Activated CD4-positive, alpha-beta T cell treated with anti-CD3 and anti-CD28 coated beads for 36 hours (primary cell): ENCODE measurements at regions of chr1 and their contacts with region 1.

Region 1: DNA sequence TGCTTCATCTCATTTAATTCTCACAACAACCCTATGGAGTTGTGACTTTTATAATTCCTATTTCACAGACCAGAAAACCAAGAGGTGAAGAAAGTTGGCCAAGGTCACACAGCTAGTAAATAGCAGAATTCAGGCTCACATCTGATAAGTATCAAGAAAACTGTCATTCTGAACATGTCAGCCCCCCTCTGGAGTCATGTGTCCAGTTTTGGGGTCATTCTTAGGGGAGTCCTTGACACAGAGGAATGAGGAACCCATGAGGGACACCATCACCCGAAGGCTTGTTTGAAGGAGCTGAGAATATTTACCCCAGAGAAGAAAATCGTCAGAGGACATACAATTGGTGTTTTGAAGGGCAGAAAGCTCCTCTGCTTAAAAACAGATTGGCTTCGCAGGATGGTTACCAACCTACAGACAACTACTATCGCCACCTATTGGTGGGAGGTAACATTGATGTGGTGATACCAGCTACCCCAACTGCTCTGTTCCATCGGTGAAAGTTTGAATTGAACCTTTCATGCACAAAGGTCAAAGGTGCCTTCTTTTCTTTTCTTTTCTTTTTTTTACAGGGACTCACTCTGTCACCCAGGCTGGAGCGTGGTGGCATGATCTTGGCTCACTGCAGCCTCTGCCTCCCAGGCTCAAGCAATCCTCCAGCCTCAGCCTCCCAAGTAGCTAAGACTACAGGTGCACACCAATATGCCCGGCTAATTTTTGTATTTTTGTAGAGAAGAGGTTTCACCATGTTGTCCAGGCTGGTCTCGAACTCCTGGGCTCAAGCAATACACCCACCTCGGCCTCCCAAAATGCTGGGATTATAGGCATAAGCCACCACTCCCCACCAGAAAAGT is 31.3 kb downstream of the NCMAP start:
- DNase-seq: peak; percentile 75
- ATAC-seq: peak; percentile 100
- H3K4me3 Mint-ChIP-seq: no peak overlapping the region
- H3K27ac Mint-ChIP-seq: peak overlapping the region; percentile 55
- H3K4me1 Mint-ChIP-seq: peaks cover 6% of the 10 kb centered on the region
- H3K27me3 Mint-ChIP-seq: peaks cover 3% of the 10 kb centered on the region

Region 2: DNA sequence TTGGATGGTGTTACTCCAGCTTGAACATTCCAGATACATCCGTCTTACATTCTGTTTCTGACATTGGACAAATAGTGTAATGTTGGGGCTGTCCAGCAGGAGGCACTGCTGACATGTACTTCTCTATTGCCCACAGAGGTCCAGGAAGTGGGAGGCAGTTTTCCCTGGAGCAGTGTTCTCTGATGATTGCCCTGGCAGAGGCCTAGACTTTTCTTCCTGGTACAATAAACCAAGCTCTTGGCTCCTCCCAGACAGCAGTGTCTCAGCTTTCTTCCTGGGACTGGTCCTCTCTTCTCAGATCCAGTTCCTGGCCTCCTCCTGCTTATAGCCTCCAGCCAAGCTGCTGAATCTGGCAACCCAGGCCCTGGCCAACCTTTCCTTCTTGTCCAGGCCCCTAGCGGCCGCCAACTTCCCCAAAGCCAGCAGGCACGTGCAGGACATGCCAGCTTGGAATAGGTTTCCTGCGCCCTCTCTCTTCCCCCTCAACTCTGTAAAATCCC is 385.2 kb before region 1 on chr1:
- CTCF ChIA-PET with region 1: interaction called, 13 read pairs
- POLR2A ChIA-PET with region 1: no interaction called
- intact Hi-C with region 1: loop called (anchors 1 kb)
- DNase-seq: peak; percentile 78
- ATAC-seq: no peak
- H3K4me3 Mint-ChIP-seq: no peak overlapping the region
- H3K27ac Mint-ChIP-seq: no peak overlapping the region
- H3K4me1 Mint-ChIP-seq: peaks cover 27% of the 10 kb centered on the region
- H3K27me3 Mint-ChIP-seq: peaks cover 2% of the 10 kb centered on the region

Region 3: DNA sequence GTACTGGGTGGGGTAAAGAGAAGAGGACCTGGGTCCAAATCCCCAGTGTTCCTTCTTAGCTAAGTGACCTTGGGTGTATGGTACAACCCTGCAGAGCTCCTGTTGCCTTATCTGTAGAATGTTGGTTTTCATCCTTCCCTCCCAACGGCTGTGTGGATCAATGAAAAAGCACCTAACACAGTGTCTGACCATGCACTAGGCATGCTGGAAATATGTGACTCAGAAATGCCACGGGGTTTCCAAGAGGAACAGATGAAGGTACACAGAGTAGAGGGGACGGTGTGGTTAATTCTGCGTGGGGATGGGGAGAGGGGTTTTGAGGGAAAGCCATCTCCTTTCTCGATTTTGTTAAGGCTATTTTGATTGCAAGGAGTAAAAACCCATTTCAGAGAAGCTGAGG is 163.0 kb before region 1 on chr1:
- CTCF ChIA-PET with region 1: interaction called, 63 read pairs
- POLR2A ChIA-PET with region 1: no interaction called
- intact Hi-C with region 1: no loop called
- DNase-seq: peak; percentile 25
- ATAC-seq: peak; percentile 53
- H3K4me3 Mint-ChIP-seq: no peak overlapping the region
- H3K27ac Mint-ChIP-seq: peak overlapping the region; percentile 67
- H3K4me1 Mint-ChIP-seq: peaks cover 61% of the 10 kb centered on the region
- H3K27me3 Mint-ChIP-seq: no peaks in the 10 kb centered on the region

Region 4: GRCh38 chr1:24526940-24527542 is 60.2 kb before region 1 on chr1:
- CTCF ChIA-PET with region 1: interaction called, 32 read pairs
- POLR2A ChIA-PET with region 1: no interaction called
- intact Hi-C with region 1: no loop called
- DNase-seq: peak; percentile 68
- ATAC-seq: peak; percentile 76
- H3K4me3 Mint-ChIP-seq: no peak overlapping the region
- H3K27ac Mint-ChIP-seq: no peak overlapping the region
- H3K4me1 Mint-ChIP-seq: peaks cover 71% of the 10 kb centered on the region
- H3K27me3 Mint-ChIP-seq: no peaks in the 10 kb centered on the region

Region 5: GRCh38 chr1:24541711-24542346 is 45.4 kb before region 1 on chr1:
- CTCF ChIA-PET with region 1: interaction called, 45 read pairs
- POLR2A ChIA-PET with region 1: interaction called, 3 read pairs
- intact Hi-C with region 1: loop called (anchors 1 kb)
- DNase-seq: peak; percentile 68
- ATAC-seq: no peak
- H3K4me3 Mint-ChIP-seq: peak overlapping the region; percentile 48
- H3K27ac Mint-ChIP-seq: peak overlapping the region; percentile 93
- H3K4me1 Mint-ChIP-seq: peaks cover 69% of the 10 kb centered on the region
- H3K27me3 Mint-ChIP-seq: no peaks in the 10 kb centered on the region

Region 6: DNA sequence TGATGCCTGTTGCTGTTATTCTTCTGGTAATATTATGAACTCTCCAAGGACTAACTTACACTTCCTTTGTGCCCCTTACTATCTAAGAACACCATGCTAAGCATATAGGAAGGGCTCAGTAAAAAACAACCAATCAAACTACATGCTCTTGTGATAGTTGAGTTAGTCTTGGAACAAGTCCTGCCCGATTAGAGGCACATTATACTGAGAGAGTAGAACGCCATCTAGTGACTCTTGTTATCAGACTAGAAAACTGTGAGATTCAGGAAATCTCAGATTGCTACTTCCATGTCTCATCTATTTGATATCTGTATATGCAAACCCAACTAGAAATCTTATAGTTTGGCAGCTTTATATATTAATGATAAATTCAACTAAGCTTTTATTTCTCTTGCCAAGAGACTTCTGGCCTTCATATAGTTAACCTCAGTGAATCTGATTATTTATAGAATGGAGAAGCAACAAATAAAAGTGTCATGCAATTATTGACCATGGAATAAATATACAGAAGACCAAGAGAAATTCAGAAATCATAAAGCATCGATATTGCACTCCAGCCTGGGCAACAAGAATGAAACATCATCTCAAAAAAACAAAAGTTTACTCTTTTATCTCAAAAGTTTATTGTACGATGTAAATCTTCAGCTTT is 48.1 kb after region 1 on chr1:
- CTCF ChIA-PET with region 1: interaction called, 13 read pairs
- POLR2A ChIA-PET with region 1: no interaction called
- intact Hi-C with region 1: loop called in 1 of 2 experiments (anchors 2 kb)
- DNase-seq: no peak
- ATAC-seq: peak; percentile 84
- H3K4me3 Mint-ChIP-seq: no peak overlapping the region
- H3K27ac Mint-ChIP-seq: no peak overlapping the region
- H3K4me1 Mint-ChIP-seq: peaks cover 12% of the 10 kb centered on the region
- H3K27me3 Mint-ChIP-seq: peaks cover 2% of the 10 kb centered on the region

Region 7: GRCh38 chr1:24978383-24979032 is 391.3 kb after region 1 on chr1:
- CTCF ChIA-PET with region 1: no interaction called
- POLR2A ChIA-PET with region 1: no interaction called
- intact Hi-C with region 1: no loop called
- DNase-seq: peak; percentile 12
- ATAC-seq: peak; percentile 35
- H3K4me3 Mint-ChIP-seq: no peak overlapping the region
- H3K27ac Mint-ChIP-seq: peak overlapping the region; percentile 55
- H3K4me1 Mint-ChIP-seq: peaks cover 64% of the 10 kb centered on the region
- H3K27me3 Mint-ChIP-seq: no peaks in the 10 kb centered on the region